Psoas muscle (tissue), 8 donors: ENCODE measurements at regions of chr18 and their contacts with region 1.

Region 1: GRCh38 chr18:3593904-3594661 is 144.1 kb downstream of the TGIF1 start:
- DNase-seq: peak; percentile 79 to 84
- ATAC-seq: peak; percentile 73 to 84 (median 75)
- H3K4me3 ChIP-seq: peak overlapping the region; percentile 69
- H3K27ac ChIP-seq: peak overlapping the region; percentile 94
- H3K4me1 ChIP-seq: peaks cover 32% of the 10 kb centered on the region
- H3K27me3 ChIP-seq: no peaks in the 10 kb centered on the region
- CTCF ChIP-seq: peak; percentile 86

Region 2: DNA sequence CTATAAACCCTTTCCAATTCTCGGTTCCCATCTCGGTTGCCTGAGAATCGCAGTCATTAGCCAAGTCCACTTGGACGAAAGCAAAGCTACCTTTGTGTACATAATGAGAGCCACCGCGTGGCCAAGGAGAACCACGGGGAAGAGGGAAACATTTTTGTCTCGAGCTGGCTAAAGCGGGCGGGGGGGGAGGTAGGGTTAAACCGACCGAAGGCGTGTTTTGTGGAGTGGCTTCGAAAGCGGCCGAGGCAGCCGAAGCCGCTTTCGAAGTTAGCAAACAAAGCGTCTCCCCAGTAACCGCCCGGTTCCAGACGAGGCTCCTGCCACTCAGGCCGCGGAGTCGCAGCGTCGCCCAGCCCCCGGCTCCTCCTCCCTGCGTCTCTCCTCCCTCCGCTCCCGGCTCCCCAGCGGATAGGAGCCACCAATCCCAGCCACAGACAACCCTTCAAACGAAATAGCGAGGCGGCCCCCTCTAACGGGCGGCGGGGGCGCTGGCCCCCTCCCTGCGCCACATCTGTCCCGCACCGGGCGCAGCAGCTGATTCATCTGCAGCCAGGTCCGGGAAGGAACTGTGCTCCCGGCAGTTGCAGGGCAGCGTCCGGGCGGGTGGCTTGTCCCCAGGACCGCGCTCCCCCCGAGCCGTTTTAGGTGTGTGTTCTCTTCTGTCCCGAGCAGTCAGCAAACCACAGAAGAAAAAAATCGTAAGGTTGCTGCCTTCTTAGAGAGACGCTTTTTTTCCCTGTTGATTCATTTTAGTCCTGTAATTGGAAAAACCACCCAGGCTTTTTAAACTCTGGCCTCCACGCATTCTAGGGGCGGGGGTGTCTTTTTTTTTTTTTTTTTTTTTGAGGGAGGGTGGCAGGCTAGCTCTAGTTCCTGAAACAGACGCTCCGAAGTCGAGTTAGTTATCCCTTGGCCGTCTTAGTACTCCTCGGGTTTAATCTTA is 145.9 kb before region 1 on chr18:
- intact Hi-C with region 1: loop called (anchors 1 to 5 kb)
- DNase-seq: peak; percentile 94 to 97
- ATAC-seq: peak; percentile 67 to 74 (median 71)
- H3K4me3 ChIP-seq: peak overlapping the region; percentile 97
- H3K27ac ChIP-seq: peak overlapping the region; percentile 100
- H3K4me1 ChIP-seq: peaks cover 10% of the 10 kb centered on the region
- H3K27me3 ChIP-seq: no peaks in the 10 kb centered on the region
- CTCF ChIP-seq: peak; percentile 10

Region 3: GRCh38 chr18:3511922-3512372 is 82.1 kb before region 1 on chr18:
- intact Hi-C with region 1: loop called in 1 of 2 experiments (anchors 5 kb)
- DNase-seq: no peak
- ATAC-seq: peak in 2 of 4 donors; percentile 32 to 35
- H3K4me3 ChIP-seq: no peak overlapping the region
- H3K27ac ChIP-seq: no peak overlapping the region
- H3K4me1 ChIP-seq: no peaks in the 10 kb centered on the region
- H3K27me3 ChIP-seq: peaks cover 0 to 2% (median 0%) of the 10 kb centered on the region in 3 donors
- CTCF ChIP-seq: no peak

Region 4: DNA sequence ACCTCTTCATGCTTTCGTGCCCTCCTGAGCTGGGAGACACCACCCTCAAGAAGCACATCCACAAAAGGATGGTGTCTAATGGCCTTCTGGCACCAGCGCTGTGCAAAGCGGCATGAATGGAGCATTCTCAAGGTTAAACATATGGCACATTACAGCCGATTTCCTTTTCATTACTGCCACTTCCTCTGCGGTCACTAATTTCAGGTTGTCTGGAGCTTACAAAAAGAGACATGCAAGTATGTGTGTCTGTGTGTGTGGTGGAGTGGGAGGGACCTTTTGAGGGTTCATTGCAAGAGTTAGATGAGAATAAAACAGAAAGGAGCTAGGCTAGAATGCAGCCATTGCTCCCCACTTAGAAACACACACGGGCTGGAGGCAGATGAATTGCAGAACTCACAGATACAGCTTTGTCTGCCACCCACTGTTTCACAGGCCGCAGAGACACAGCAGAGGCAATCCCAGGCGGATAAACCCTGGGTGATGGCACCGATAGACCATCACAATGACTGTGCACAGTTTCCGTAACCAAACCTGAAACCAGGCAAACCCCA is 68.1 kb before region 1 on chr18:
- intact Hi-C with region 1: loop called in 1 of 2 experiments (anchors 5 kb)
- DNase-seq: no peak
- ATAC-seq: peak; percentile 62 to 78 (median 75)
- H3K4me3 ChIP-seq: peak overlapping the region; percentile 17
- H3K27ac ChIP-seq: peak overlapping the region; percentile 74
- H3K4me1 ChIP-seq: peaks cover 11% of the 10 kb centered on the region
- H3K27me3 ChIP-seq: peaks cover 0 to 2% (median 0%) of the 10 kb centered on the region in 3 donors
- CTCF ChIP-seq: no peak